HEK293T (cell line): ENCODE measurements at regions of chr5 and their contacts with region 1.

Region 1: DNA sequence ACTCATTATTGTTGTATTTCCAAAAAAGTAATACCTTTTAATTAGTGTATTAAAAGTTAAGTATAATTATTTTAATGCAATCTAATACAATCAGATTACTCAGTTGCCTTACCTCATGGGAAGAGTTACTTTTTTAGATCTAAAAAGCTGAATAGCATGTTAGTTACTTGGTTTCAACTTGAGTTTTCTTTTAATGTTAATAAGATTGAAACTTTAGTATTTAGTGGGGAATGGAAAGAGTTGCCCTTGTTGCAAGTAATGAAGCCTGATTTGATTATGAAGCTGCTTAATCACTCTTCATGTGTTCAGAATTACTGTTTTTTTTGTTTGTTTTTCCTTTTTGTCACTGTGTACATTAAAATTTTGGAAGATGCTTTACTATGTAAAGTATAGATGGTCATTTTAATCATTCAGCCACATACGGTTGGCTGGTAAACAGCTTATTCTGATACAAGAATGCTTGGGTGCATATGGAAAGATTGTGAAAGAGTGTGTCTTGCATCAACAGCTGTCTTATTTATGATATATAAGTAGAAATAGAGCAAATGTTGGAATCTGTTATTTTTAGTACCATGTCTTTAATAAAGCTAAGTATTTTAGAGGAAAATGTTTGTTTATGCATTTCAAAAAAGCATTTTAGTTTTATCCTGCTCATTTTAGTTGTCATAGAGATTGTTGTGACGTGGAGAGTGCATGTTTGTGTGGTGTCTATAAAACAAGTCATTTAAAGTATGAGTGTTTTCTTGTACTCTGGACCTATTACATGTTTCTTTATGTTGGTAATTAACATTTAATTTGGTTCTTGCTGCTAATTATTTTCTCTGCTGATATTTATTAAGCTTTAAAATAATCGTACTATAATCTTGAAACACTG is 36.4 kb downstream of the SREK1 start:
- DNase-seq: no peak

Region 2: GRCh38 chr5:65460551-65460950 is 720.0 kb before region 1 on chr5:
- CTCF ChIA-PET with region 1: interaction called, 13 read pairs
- POLR2A ChIA-PET with region 1: no interaction called
- DNase-seq: no peak